ENCODE measurements at regions of chr11 and their contacts with region 1.

Region 1: GRCh38 chr11:128956401-128957201 is 13.9 kb upstream of the TP53AIP1 start:
- DNase-seq: peak; percentile 36
- H3K4me3 Mint-ChIP-seq: no peak overlapping the region
- H3K27ac Mint-ChIP-seq: no peak overlapping the region
- H3K4me1 Mint-ChIP-seq: peaks cover 2% of the 10 kb centered on the region
- H3K27me3 Mint-ChIP-seq: peaks cover 18% of the 10 kb centered on the region

Region 2: DNA sequence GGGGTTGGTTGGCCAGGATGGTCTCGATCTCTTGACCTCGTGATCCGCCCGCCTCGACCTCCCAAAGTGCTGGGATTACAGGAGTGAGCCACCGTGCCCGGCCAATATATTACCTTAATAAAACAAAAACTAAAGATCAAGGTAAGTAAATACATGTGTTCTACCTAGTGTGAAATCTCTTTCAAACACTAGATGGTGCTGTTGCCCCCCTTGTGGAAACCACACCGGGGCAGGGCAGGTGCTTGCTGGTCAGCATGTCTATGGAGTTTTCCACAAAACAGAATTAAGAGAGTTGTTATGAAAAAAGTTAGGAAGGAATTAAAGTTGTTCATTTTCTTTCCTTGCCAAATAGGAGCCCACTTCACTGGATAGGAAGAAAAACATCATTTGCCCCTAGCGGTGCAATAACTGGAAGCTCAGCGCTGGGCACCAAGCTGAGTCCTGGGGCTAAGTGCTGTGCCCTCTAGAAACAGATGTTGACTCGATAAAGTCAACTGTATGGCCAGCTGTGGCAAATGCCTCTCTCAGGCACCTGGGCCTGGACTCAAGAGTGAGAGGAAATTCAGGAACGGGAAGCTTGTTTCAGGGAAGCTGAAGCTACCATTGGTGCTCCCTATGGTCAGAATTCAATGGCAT is 71.8 kb before region 1 on chr11:
- CTCF ChIA-PET with region 1: interaction called, 20 read pairs
- POLR2A ChIA-PET with region 1: interaction called, 3 read pairs
- DNase-seq: peak; percentile 72
- H3K4me3 Mint-ChIP-seq: no peak overlapping the region
- H3K27ac Mint-ChIP-seq: no peak overlapping the region
- H3K4me1 Mint-ChIP-seq: peaks cover 14% of the 10 kb centered on the region
- H3K27me3 Mint-ChIP-seq: peaks cover 64% of the 10 kb centered on the region

Region 3: GRCh38 chr11:128914216-128915148 is 42.1 kb before region 1 on chr11:
- CTCF ChIA-PET with region 1: no interaction called
- POLR2A ChIA-PET with region 1: no interaction called
- DNase-seq: no peak
- H3K4me3 Mint-ChIP-seq: no peak overlapping the region
- H3K27ac Mint-ChIP-seq: no peak overlapping the region
- H3K4me1 Mint-ChIP-seq: peaks cover 3% of the 10 kb centered on the region
- H3K27me3 Mint-ChIP-seq: peaks cover 2% of the 10 kb centered on the region

Measured in activated CD4-positive, alpha-beta T cell treated with anti-CD3 and anti-CD28 coated beads, Interleukin-2, amount 10 ng/mL, durations not matched to agents 7 days and 5 days (primary cell).